AG04449 (cell line): ENCODE measurements at regions of chr9 and their contacts with region 1.

Region 1: GRCh38 chr9:75083188-75083970 is 4.6 kb downstream of the NMRK1 start:
- DNase-seq: no peak
- H3K4me3 ChIP-seq: no peak overlapping the region
- CTCF ChIP-seq: no peak

Region 2: GRCh38 chr9:75064307-75065025 is 18.9 kb before region 1 on chr9:
- CTCF ChIA-PET with region 1: interaction called, 14 read pairs
- POLR2A ChIA-PET with region 1: no interaction called
- DNase-seq: no peak
- H3K4me3 ChIP-seq: no peak overlapping the region
- CTCF ChIP-seq: no peak